Activated CD4-positive, alpha-beta memory T cell treated with anti-CD3 and anti-CD28 coated beads for 36 hours (primary cell): ENCODE measurements at regions of chr14 and their contacts with region 1.

Region 1: DNA sequence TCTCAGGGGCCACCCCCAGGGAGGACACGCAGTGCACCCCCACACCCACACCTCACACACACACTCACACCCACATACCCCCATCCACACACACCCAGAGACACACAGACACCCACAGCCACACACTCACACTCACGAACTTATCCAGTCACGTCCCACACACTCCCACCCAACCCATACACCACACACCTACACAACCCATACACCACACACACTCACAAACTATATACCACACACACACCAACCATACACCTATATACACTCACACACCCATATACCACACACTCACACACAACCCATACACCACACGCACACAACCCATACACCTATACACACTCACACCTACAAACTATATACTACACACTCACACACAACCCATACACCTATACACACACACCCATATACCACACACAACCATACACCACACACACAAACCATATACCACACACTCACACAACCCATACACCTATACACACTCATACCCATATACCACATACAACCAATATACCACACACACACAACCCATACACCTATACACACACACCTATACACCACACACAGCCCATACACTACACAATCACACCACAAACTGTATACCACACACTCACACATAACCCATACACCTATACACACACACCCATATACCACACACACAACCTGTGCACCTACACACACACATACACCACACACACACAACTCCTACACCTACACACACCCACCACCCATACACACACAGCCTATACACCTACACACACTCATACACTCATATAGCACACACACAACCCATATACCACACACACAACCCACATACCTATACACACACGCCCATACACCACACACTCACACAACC is 42.7 kb downstream of the TMEM121 start:
- DNase-seq: no peak
- H3K4me3 Mint-ChIP-seq: no peak overlapping the region
- H3K27ac Mint-ChIP-seq: no peak overlapping the region
- H3K4me1 Mint-ChIP-seq: no peaks in the 10 kb centered on the region
- H3K27me3 Mint-ChIP-seq: no peaks in the 10 kb centered on the region

Region 2: DNA sequence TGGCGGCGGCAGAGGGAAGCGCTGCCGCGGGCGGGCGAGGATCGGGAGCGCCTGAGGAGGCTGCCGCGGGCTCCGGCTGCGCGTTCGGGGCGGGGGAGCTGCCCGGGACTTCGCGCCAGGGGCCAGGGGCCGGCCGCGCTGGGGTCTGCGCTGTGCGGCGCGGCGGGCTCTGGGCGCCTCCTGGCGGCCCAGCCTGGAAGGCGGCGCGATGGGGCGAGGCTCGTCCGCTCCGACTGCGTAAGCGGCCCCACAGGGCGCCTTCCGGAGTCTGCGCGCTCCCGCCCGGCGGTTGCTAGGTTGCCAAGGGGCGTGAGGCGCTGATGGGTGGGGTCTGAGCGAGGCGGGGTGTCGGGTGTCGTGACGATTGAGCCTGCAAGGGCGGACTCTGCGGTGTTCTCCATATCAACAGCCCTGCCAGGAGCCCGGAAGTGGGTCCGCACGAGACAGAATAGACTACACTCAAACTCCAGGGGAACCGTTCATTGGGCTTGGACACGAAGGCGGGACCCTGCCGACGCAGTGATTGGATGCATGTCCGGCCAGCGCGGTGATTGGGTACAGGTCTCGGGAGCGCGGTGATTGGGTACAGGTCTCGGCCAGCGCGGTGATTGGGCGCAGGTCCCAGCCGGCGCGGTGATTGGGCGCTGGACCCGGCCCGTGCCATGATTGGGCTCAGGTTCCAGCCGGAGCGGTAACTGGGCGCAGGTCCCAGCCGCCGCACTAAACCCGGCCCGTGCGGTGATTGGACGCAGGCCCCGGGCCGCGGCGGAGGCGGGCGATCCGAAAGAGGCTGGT is 78.3 kb before region 1 on chr14 and contains the start of gene TEDC1:
- CTCF ChIA-PET with region 1: no interaction called
- POLR2A ChIA-PET with region 1: no interaction called
- intact Hi-C with region 1: no loop called
- DNase-seq: peak; percentile 100
- H3K4me3 Mint-ChIP-seq: peak within 1 kb of the TSS; percentile 82
- H3K27ac Mint-ChIP-seq: peak within 1 kb of the TSS; percentile 91
- H3K4me1 Mint-ChIP-seq: peaks cover 20% of the 10 kb centered on the region
- H3K27me3 Mint-ChIP-seq: no peaks in the 10 kb centered on the region
- total RNA-seq, gene TEDC1: 40.2 to 44.8 TPM

Region 3: DNA sequence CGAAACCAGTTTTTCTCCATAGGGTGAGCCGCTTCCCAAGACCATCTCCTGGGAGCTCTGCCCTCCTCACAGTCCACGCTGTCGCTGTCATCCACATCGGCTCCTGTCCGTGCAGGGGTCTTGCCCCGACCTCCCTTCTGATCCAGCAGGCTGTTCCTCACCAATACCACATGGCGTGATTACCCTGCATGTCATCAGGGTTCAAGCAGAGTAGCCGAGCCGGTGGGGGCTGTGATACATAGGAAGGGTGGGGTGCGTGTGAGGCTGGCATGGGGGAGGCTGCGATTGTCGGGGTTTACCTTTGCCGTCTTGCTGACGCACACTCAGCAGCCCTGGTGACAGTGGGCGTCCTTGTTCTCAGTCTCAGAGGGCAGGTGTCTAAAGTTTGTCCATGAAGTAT is 61.0 kb before region 1 on chr14:
- CTCF ChIA-PET with region 1: no interaction called
- POLR2A ChIA-PET with region 1: no interaction called
- intact Hi-C with region 1: no loop called
- DNase-seq: no peak
- H3K4me3 Mint-ChIP-seq: no peak overlapping the region
- H3K27ac Mint-ChIP-seq: no peak overlapping the region
- H3K4me1 Mint-ChIP-seq: no peaks in the 10 kb centered on the region
- H3K27me3 Mint-ChIP-seq: peaks cover 25% of the 10 kb centered on the region

Region 4: GRCh38 chr14:105527661-105528581 is 41.2 kb before region 1 on chr14:
- CTCF ChIA-PET with region 1: no interaction called
- POLR2A ChIA-PET with region 1: no interaction called
- intact Hi-C with region 1: no loop called
- DNase-seq: peak; percentile 86
- H3K4me3 Mint-ChIP-seq: peak overlapping the region; percentile 75
- H3K27ac Mint-ChIP-seq: peak overlapping the region; percentile 42
- H3K4me1 Mint-ChIP-seq: peaks cover 20% of the 10 kb centered on the region
- H3K27me3 Mint-ChIP-seq: peaks cover 2% of the 10 kb centered on the region

Region 5: DNA sequence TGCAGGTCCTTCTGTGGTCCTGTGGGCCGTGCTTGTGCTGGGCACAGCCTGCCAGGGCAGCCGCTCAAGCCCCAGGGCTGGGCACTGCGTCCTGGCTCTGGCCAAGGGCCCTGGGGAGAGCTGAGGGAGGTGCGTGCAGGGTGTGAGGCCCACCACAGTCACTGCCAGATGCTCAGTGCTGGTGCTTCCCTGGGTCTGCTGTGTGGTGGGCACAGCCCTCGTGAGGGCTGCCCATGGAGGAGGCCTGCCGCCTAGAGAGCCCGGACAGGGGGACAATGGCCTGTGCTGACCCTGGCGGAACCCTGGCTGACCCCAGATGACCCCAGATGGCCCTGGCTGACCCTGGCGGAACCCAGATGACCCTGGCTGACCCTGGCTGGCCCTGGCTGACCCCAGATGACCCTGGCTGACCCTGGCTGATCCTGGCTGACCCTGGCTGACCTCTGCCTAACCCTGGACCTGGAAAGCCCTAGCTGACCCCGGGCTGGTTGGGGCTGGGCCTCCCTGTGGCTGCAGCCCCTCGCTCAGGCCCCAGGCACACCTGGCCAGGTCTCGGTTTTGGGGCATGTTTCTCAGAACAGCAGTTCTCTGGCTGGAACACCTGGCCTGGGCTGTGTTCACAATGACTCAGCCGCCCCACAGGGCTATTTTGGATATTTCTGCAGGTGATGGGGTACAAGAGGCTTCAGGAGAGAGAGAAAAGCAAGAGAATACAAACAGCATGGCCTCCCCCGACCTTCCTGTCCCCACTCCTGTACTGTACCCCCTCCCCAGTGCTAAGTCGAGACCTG is 12.7 kb after region 1 on chr14:
- CTCF ChIA-PET with region 1: no interaction called
- POLR2A ChIA-PET with region 1: no interaction called
- intact Hi-C with region 1: no loop called
- DNase-seq: no peak
- H3K4me3 Mint-ChIP-seq: no peak overlapping the region
- H3K27ac Mint-ChIP-seq: no peak overlapping the region
- H3K4me1 Mint-ChIP-seq: no peaks in the 10 kb centered on the region
- H3K27me3 Mint-ChIP-seq: no peaks in the 10 kb centered on the region

Region 6: DNA sequence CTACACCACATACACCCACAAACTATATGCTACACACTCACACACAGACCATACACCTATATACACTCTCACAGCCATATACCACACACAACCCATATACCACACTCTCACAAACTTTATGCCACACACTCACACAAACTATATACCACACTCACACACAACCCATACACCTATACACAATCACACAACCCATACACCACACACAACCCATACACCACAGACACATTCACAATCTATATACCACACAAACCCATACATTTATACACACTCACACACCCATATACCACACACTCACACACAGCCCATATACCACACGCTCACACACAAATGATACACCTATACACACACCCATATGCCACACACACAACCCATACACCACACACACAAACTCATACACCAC is 120.6 kb after region 1 on chr14:
- CTCF ChIA-PET with region 1: no interaction called
- POLR2A ChIA-PET with region 1: no interaction called
- intact Hi-C with region 1: loop called (anchors 2 kb)
- DNase-seq: no peak
- H3K4me3 Mint-ChIP-seq: no peak overlapping the region
- H3K27ac Mint-ChIP-seq: no peak overlapping the region
- H3K4me1 Mint-ChIP-seq: no peaks in the 10 kb centered on the region
- H3K27me3 Mint-ChIP-seq: no peaks in the 10 kb centered on the region